ENCODE measurements at regions of chr4 and their contacts with region 1.

Region 1: DNA sequence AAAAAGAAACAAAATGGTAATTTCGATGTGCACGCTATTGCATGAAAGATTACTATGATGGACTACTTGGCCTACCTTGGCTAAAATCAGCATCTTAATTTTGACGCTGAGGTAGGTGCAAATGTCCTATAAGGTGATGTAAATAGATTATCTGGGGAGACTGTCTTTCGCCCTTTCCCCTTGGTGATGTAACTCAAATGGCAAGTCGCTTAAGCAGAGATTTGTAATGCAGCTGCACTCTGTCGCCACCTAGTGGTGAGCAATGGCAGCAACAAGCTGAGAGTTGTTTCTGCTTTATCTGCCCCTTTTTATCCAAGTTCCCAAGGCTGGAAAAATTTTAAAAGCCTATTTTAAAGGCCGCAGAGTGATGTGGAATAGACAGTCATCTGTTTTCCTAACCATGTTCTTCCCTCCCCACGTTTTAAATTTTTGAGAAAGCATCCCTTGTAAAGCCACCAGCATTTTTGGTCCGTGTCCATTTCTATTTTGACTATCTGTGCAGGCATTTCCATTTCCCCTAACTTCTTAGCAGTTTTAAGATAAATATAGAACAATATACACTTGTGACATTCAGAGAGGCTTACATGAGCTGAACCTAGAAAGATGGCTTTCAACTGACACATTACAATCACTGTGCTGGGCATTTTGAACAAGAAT is 62.4 kb upstream of the PDLIM3 start:
- DNase-seq: peak; percentile 53 to 63 (median 57)
- H3K4me3 ChIP-seq: no peak overlapping the region
- H3K4me3 Mint-ChIP-seq: no peak overlapping the region
- H3K27ac ChIP-seq: no peak overlapping the region
- H3K27ac Mint-ChIP-seq: no peak overlapping the region
- H3K4me1 ChIP-seq: no peaks in the 10 kb centered on the region
- H3K4me1 Mint-ChIP-seq: peaks cover 0 to 6% (median 0%) of the 10 kb centered on the region in 4 donors
- H3K27me3 ChIP-seq: no peaks in the 10 kb centered on the region
- H3K27me3 Mint-ChIP-seq: peaks cover 13 to 16% of the 10 kb centered on the region in 2 donors

Region 2: GRCh38 chr4:185039508-185040273 is 558.0 kb before region 1 on chr4:
- CTCF ChIA-PET with region 1: interaction called, 11 read pairs
- POLR2A ChIA-PET with region 1: no interaction called
- intact Hi-C with region 1: loop called (anchors 1 kb)
- DNase-seq: peak; percentile 46 to 60 (median 56)
- H3K4me3 ChIP-seq: no peak overlapping the region
- H3K4me3 Mint-ChIP-seq: peak overlapping the region in 3 of 8 donors; percentile 1 to 35 (median 33)
- H3K27ac ChIP-seq: no peak overlapping the region
- H3K27ac Mint-ChIP-seq: no peak overlapping the region
- H3K4me1 ChIP-seq: peaks cover 7% of the 10 kb centered on the region
- H3K4me1 Mint-ChIP-seq: peaks cover 4 to 6% (median 4%) of the 10 kb centered on the region in 4 donors
- H3K27me3 ChIP-seq: no peaks in the 10 kb centered on the region
- H3K27me3 Mint-ChIP-seq: peaks cover 9 to 16% of the 10 kb centered on the region in 2 donors

Region 3: GRCh38 chr4:185203486-185204237 is 394.0 kb before region 1 on chr4 and contains the start of gene CFAP97:
- CTCF ChIA-PET with region 1: no interaction called
- POLR2A ChIA-PET with region 1: no interaction called
- intact Hi-C with region 1: loop called (anchors 10 kb)
- DNase-seq: peak; percentile 88 to 90 (median 90)
- H3K4me3 ChIP-seq: peak within 1 kb of the TSS; percentile 47 to 83
- H3K4me3 Mint-ChIP-seq: peak within 1 kb of the TSS; percentile 91 to 99 (median 96)
- H3K27ac ChIP-seq: peak within 1 kb of the TSS; percentile 82
- H3K27ac Mint-ChIP-seq: peak within 1 kb of the TSS; percentile 98 to 99 (median 99)
- H3K4me1 ChIP-seq: peaks cover 48% of the 10 kb centered on the region
- H3K4me1 Mint-ChIP-seq: peaks cover 31 to 66% (median 48%) of the 10 kb centered on the region in 4 donors
- H3K27me3 ChIP-seq: no peaks in the 10 kb centered on the region
- H3K27me3 Mint-ChIP-seq: no peaks in the 10 kb centered on the region
- total RNA-seq, gene CFAP97: 41.6 to 41.9 TPM

Region 4: DNA sequence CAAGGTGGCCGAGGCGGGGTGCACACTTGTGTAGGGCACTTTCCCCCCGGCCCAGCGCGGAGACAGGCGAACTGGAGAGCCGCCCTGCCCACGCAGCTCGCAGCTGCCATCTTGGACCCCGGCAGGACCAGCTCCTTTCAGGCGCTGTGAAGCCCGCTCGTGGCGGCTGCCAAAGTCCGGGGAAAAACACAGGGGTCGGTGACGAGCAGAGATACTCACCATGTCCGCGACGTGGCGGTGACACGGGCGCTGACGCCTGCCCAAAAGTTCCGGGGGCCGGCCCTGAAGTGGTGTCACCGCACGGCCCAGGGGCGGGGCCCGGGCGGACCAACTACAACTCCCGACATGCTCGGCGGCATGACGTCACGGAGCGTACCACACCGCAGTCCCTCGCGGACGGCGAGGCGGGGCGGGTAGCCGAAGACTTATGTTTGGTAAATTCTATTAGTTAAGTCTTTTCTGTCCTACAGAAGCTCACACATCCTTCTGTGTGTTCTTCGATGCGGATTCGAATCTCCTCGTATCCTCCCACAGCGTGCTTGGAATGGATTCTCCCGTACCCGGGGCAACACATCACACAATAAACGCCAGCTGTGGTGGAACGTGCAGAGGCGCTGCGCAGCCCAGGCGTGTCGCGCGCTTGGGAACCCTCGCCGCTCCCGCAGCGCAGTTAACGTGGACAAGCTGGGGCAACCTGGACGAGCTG is 171.9 kb before region 1 on chr4 and contains the start of gene UFSP2:
- CTCF ChIA-PET with region 1: interaction called, 10 read pairs
- POLR2A ChIA-PET with region 1: no interaction called
- intact Hi-C with region 1: no loop called
- DNase-seq: peak; percentile 91 to 96 (median 92)
- H3K4me3 ChIP-seq: peak within 1 kb of the TSS; percentile 45 to 77
- H3K4me3 Mint-ChIP-seq: peak within 1 kb of the TSS; percentile 89 to 98 (median 96)
- H3K27ac ChIP-seq: peak within 1 kb of the TSS; percentile 99
- H3K27ac Mint-ChIP-seq: peak within 1 kb of the TSS; percentile 92 to 100 (median 100)
- H3K4me1 ChIP-seq: peaks cover 24% of the 10 kb centered on the region
- H3K4me1 Mint-ChIP-seq: peaks cover 23 to 46% (median 29%) of the 10 kb centered on the region in 4 donors
- H3K27me3 ChIP-seq: no peaks in the 10 kb centered on the region
- H3K27me3 Mint-ChIP-seq: peaks cover 1 to 2% of the 10 kb centered on the region in 2 donors
- total RNA-seq, gene UFSP2: 30.1 to 30.3 TPM

Region 5: GRCh38 chr4:185587427-185588161 is 10.1 kb before region 1 on chr4:
- CTCF ChIA-PET with region 1: interaction called, 25 read pairs
- POLR2A ChIA-PET with region 1: no interaction called
- intact Hi-C with region 1: no loop called
- DNase-seq: peak; percentile 68 to 91 (median 74)
- H3K4me3 ChIP-seq: peak overlapping the region in 1 of 2 donors; percentile 13
- H3K4me3 Mint-ChIP-seq: peak overlapping the region; percentile 34 to 81 (median 67)
- H3K27ac ChIP-seq: no peak overlapping the region
- H3K27ac Mint-ChIP-seq: peak overlapping the region; percentile 58 to 96 (median 90)
- H3K4me1 ChIP-seq: peaks cover 9% of the 10 kb centered on the region
- H3K4me1 Mint-ChIP-seq: peaks cover 7 to 14% (median 12%) of the 10 kb centered on the region in 4 donors
- H3K27me3 ChIP-seq: peaks cover 6% of the 10 kb centered on the region
- H3K27me3 Mint-ChIP-seq: peaks cover 24 to 37% of the 10 kb centered on the region in 2 donors

Region 6: GRCh38 chr4:185608185-185608584 is 10.5 kb after region 1 on chr4:
- CTCF ChIA-PET with region 1: interaction called, 47 read pairs
- POLR2A ChIA-PET with region 1: no interaction called
- intact Hi-C with region 1: no loop called
- DNase-seq: no peak
- H3K4me3 ChIP-seq: no peak overlapping the region
- H3K4me3 Mint-ChIP-seq: no peak overlapping the region
- H3K27ac ChIP-seq: no peak overlapping the region
- H3K27ac Mint-ChIP-seq: no peak overlapping the region
- H3K4me1 ChIP-seq: no peaks in the 10 kb centered on the region
- H3K4me1 Mint-ChIP-seq: peaks cover 0 to 4% (median 1%) of the 10 kb centered on the region in 4 donors
- H3K27me3 ChIP-seq: no peaks in the 10 kb centered on the region
- H3K27me3 Mint-ChIP-seq: peaks cover 2 to 7% of the 10 kb centered on the region in 2 donors